Activated CD8-positive, alpha-beta memory T cell treated with anti-CD3 and anti-CD28 coated beads, Interleukin-2, amount 10 ng/mL, durations not matched to agents 7 days and 5 days (primary cell): ENCODE measurements at regions of chr6 and their contacts with region 1.

Region 1: GRCh38 chr6:42901536-42901957 is 14.3 kb upstream of the PTCRA start:
- DNase-seq: peak; percentile 81
- ATAC-seq: peak; percentile 99
- H3K4me3 Mint-ChIP-seq: no peak overlapping the region
- H3K27ac Mint-ChIP-seq: no peak overlapping the region
- H3K4me1 Mint-ChIP-seq: peaks cover 15% of the 10 kb centered on the region
- H3K27me3 Mint-ChIP-seq: no peaks in the 10 kb centered on the region

Region 2: DNA sequence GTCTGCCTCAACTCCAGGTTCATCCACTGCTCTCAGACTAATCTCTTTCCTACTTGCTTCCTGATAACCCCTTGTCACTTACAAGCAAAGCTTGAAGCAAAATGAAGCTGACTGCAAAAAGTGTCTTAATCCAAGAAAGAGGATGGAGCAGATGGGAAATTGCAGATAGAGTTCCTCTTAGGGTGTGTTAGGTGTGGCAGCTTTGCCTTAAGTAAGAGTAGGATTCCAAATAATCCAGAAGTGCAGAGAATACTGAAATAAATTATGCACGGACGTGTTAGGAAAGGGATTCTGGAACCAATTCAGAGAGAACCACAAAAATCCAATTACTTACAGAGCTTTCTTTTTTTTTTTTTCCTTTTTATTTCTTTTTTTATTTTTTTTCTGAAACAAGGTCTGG is 28.2 kb before region 1 on chr6:
- CTCF ChIA-PET with region 1: no interaction called
- DNase-seq: no peak
- ATAC-seq: no peak
- H3K4me3 Mint-ChIP-seq: no peak overlapping the region
- H3K27ac Mint-ChIP-seq: no peak overlapping the region
- H3K4me1 Mint-ChIP-seq: peaks cover 4% of the 10 kb centered on the region
- H3K27me3 Mint-ChIP-seq: no peaks in the 10 kb centered on the region

Region 3: GRCh38 chr6:42890311-42891198 is 11.0 kb before region 1 on chr6:
- CTCF ChIA-PET with region 1: interaction called, 12 read pairs
- DNase-seq: peak; percentile 96
- ATAC-seq: peak; percentile 95
- H3K4me3 Mint-ChIP-seq: peak overlapping the region; percentile 83
- H3K27ac Mint-ChIP-seq: peak overlapping the region; percentile 95
- H3K4me1 Mint-ChIP-seq: peaks cover 31% of the 10 kb centered on the region
- H3K27me3 Mint-ChIP-seq: no peaks in the 10 kb centered on the region

Region 4: DNA sequence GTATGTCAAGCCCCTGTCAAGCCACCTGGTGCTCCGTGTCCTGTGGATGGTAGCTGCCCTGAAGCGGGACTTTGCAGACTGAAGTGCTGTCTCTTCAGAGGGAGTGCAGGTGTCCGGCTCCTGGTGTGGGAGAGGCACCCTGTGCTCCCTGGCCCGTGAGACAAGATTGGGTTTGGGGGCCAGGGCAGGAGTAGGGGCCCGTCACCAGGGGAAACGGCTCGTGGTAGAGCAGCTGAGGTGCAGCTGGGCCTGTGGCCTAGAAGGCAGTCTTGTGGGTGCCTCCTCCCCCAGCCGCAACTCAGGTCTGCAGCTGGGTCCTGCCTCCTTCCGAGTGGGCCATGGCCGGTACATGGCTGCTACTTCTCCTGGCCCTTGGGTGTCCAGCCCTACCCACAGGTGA is 14.2 kb after region 1 on chr6 and contains the start of gene PTCRA:
- CTCF ChIA-PET with region 1: interaction called, 22 read pairs
- DNase-seq: no peak
- ATAC-seq: no peak
- H3K4me3 Mint-ChIP-seq: no peak within 1 kb of the TSS
- H3K27ac Mint-ChIP-seq: no peak within 1 kb of the TSS
- H3K4me1 Mint-ChIP-seq: peaks cover 7% of the 10 kb centered on the region
- H3K27me3 Mint-ChIP-seq: peaks cover 14% of the 10 kb centered on the region
- total RNA-seq, gene PTCRA: not detected